ENCODE measurements at regions of chr1 and their contacts with region 1.

Region 1: GRCh38 chr1:70509996-70510876 is 99.2 kb downstream of the CTH start:
- DNase-seq: peak in 2 of 4 donors; percentile 36 to 71
- ATAC-seq: peak; percentile 96
- H3K4me3 ChIP-seq: no peak overlapping the region
- H3K27ac ChIP-seq: no peak overlapping the region
- H3K4me1 ChIP-seq: no peaks in the 10 kb centered on the region
- H3K27me3 ChIP-seq: no peaks in the 10 kb centered on the region
- CTCF ChIP-seq: peak; percentile 48 to 61

Region 2: GRCh38 chr1:70134148-70134547 is 376.1 kb before region 1 on chr1:
- intact Hi-C with region 1: loop called in 1 of 2 experiments (anchors 10 kb)
- DNase-seq: no peak
- ATAC-seq: no peak
- H3K4me3 ChIP-seq: no peak overlapping the region
- H3K27ac ChIP-seq: no peak overlapping the region
- H3K4me1 ChIP-seq: no peaks in the 10 kb centered on the region
- H3K27me3 ChIP-seq: peaks cover 0 to 4% of the 10 kb centered on the region in 2 donors
- CTCF ChIP-seq: no peak

Region 3: DNA sequence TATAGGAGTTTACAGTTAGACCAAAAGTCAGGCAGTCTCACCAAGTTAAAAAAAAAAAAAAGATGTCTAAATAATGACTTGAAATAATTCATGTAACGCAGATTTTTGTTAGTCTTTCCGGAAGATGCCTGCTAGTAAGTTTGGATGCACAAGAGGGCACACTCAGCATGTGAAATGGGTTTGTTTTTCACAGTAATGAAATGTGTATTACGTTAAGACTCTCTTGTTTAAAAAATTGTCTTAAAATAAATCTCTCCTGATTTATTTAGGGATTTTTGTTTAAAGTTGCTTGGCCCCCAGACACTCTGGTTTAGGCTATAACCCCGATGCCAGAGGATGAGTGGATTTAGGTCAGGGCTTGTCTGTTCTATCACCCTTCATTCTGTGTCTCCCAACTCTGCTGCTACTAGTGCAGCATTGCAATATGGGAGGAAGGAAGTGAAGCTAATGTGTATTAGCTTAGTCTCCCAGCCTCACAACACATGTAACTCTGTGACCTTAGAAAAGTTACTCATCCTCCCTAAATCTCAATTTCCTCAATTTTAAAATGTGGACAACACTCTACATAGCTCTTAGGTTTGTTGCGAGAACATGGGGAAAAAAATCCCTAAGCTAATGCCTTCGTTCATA is 73.5 kb before region 1 on chr1:
- intact Hi-C with region 1: loop called in 1 of 2 experiments (anchors 5 kb)
- DNase-seq: peak in 1 of 4 donors; percentile 32
- ATAC-seq: peak; percentile 36
- H3K4me3 ChIP-seq: no peak overlapping the region
- H3K27ac ChIP-seq: no peak overlapping the region
- H3K4me1 ChIP-seq: no peaks in the 10 kb centered on the region
- H3K27me3 ChIP-seq: no peaks in the 10 kb centered on the region
- CTCF ChIP-seq: no peak

Region 4: DNA sequence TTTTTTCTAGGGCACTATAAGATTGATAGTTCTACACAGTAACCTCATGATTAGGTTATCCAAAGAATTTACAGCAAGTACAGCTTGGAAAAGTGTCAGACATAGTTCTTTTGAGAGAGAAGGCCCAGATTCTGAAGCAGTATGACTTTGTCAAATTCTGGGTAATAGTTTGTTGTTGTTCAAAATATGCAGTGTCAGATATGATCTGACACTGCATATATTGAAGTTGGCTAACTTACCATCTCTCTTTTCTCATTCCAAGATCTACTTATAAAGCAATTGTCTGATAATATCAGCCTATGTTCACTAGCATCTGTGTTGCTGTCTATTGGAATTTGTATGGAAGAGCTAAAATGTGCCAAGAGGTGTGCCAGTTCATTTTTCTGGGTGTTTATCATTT is 61.0 kb after region 1 on chr1:
- intact Hi-C with region 1: no loop called
- DNase-seq: peak in 2 of 4 donors; percentile 5
- ATAC-seq: no peak
- H3K4me3 ChIP-seq: no peak overlapping the region
- H3K27ac ChIP-seq: no peak overlapping the region
- H3K4me1 ChIP-seq: no peaks in the 10 kb centered on the region
- H3K27me3 ChIP-seq: no peaks in the 10 kb centered on the region
- CTCF ChIP-seq: no peak

Region 5: DNA sequence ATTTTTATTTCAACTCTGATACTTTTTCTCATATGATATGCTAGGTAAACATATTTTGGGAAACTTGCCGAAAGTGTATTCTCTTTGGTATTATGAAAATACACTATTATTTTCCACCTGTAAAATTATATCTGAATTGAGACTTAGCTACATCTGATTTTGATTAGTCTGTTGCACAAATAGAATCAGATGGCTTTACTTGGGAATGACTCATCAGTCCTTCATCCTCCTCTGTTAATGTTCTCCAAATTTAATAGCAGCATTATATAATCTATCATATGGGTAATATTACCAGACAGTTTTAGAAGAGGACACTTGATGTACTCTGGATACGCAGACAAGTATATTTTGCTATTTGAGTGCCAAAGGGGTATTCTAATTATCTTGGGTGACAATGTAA is 146.1 kb after region 1 on chr1:
- intact Hi-C with region 1: no loop called
- DNase-seq: no peak
- ATAC-seq: no peak
- H3K4me3 ChIP-seq: no peak overlapping the region
- H3K27ac ChIP-seq: no peak overlapping the region
- H3K4me1 ChIP-seq: no peaks in the 10 kb centered on the region
- H3K27me3 ChIP-seq: no peaks in the 10 kb centered on the region
- CTCF ChIP-seq: no peak

Region 6: GRCh38 chr1:70745199-70745598 is 235.0 kb after region 1 on chr1:
- intact Hi-C with region 1: no loop called
- DNase-seq: no peak
- ATAC-seq: no peak
- H3K4me3 ChIP-seq: no peak overlapping the region
- H3K27ac ChIP-seq: no peak overlapping the region
- H3K4me1 ChIP-seq: no peaks in the 10 kb centered on the region
- H3K27me3 ChIP-seq: no peaks in the 10 kb centered on the region
- CTCF ChIP-seq: peak in 1 of 2 donors; percentile 14

Measured in left lung (tissue), 14 donors.